CD4-positive, alpha-beta memory T cell (primary cell): ENCODE measurements at regions of chr3 and their contacts with region 1.

Region 1: GRCh38 chr3:27681245-27681748 is 40.8 kb downstream of the EOMES start:
- DNase-seq: peak; percentile 31 to 73 (median 69)
- H3K4me3 ChIP-seq: no peak overlapping the region
- H3K4me3 Mint-ChIP-seq: peak overlapping the region; percentile 17 to 78 (median 71)
- H3K27ac ChIP-seq: no peak overlapping the region
- H3K27ac Mint-ChIP-seq: peak overlapping the region; percentile 2 to 77 (median 29)
- H3K4me1 ChIP-seq: peaks cover 12% of the 10 kb centered on the region
- H3K4me1 Mint-ChIP-seq: peaks cover 5 to 19% (median 14%) of the 10 kb centered on the region in 4 donors
- H3K27me3 ChIP-seq: no peaks in the 10 kb centered on the region
- H3K27me3 Mint-ChIP-seq: peaks cover 3 to 6% of the 10 kb centered on the region in 2 donors

Region 2: DNA sequence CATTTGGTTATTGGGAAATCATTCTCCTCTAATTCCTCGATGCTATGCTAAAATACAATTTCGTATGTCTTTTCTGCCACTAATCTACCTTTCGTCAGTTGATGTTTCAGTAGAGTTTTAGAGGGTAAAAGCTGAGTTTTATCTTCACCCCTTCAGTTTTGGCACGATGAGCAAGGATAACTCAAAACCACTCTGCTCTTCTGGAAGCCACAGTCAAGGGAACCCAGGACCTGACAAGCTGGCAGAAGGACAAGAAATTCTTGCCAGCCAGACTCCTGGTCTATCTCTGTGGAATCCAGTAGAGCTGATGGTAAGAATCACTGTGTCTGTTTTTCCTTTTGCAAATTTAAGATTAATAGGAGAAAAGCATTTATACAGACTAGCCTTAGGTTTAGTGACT is 1473.1 kb before region 1 on chr3:
- CTCF ChIA-PET with region 1: no interaction called
- POLR2A ChIA-PET with region 1: no interaction called
- intact Hi-C with region 1: no loop called
- DNase-seq: no peak
- H3K4me3 ChIP-seq: no peak overlapping the region
- H3K4me3 Mint-ChIP-seq: no peak overlapping the region
- H3K27ac ChIP-seq: no peak overlapping the region
- H3K27ac Mint-ChIP-seq: no peak overlapping the region
- H3K4me1 ChIP-seq: no peaks in the 10 kb centered on the region
- H3K4me1 Mint-ChIP-seq: no peaks in the 10 kb centered on the region
- H3K27me3 ChIP-seq: no peaks in the 10 kb centered on the region
- H3K27me3 Mint-ChIP-seq: no peaks in the 10 kb centered on the region

Region 3: GRCh38 chr3:27134165-27134796 is 547.0 kb before region 1 on chr3:
- CTCF ChIA-PET with region 1: interaction called, 37 read pairs
- POLR2A ChIA-PET with region 1: interaction called, 3 read pairs
- intact Hi-C with region 1: loop called (anchors 1 kb)
- DNase-seq: peak; percentile 41 to 53 (median 49)
- H3K4me3 ChIP-seq: no peak overlapping the region
- H3K4me3 Mint-ChIP-seq: no peak overlapping the region
- H3K27ac ChIP-seq: no peak overlapping the region
- H3K27ac Mint-ChIP-seq: no peak overlapping the region
- H3K4me1 ChIP-seq: no peaks in the 10 kb centered on the region
- H3K4me1 Mint-ChIP-seq: no peaks in the 10 kb centered on the region
- H3K27me3 ChIP-seq: no peaks in the 10 kb centered on the region
- H3K27me3 Mint-ChIP-seq: peaks cover 0 to 2% of the 10 kb centered on the region in 2 donors

Region 4: GRCh38 chr3:27312044-27312668 is 369.1 kb before region 1 on chr3:
- CTCF ChIA-PET with region 1: interaction called, 99 read pairs
- POLR2A ChIA-PET with region 1: no interaction called
- intact Hi-C with region 1: loop called (anchors 1 kb)
- DNase-seq: peak in 4 of 5 donors; percentile 52 to 60 (median 59)
- H3K4me3 ChIP-seq: no peak overlapping the region
- H3K4me3 Mint-ChIP-seq: no peak overlapping the region
- H3K27ac ChIP-seq: no peak overlapping the region
- H3K27ac Mint-ChIP-seq: peak overlapping the region in 1 of 7 donors; percentile 5
- H3K4me1 ChIP-seq: no peaks in the 10 kb centered on the region
- H3K4me1 Mint-ChIP-seq: no peaks in the 10 kb centered on the region
- H3K27me3 ChIP-seq: no peaks in the 10 kb centered on the region
- H3K27me3 Mint-ChIP-seq: no peaks in the 10 kb centered on the region

Region 5: GRCh38 chr3:27357665-27358258 is 323.5 kb before region 1 on chr3:
- CTCF ChIA-PET with region 1: interaction called, 16 read pairs
- POLR2A ChIA-PET with region 1: no interaction called
- intact Hi-C with region 1: loop called (anchors 1 kb)
- DNase-seq: peak; percentile 47 to 59 (median 53)
- H3K4me3 ChIP-seq: no peak overlapping the region
- H3K4me3 Mint-ChIP-seq: peak overlapping the region in 6 of 8 donors; percentile 14 to 74 (median 30)
- H3K27ac ChIP-seq: no peak overlapping the region
- H3K27ac Mint-ChIP-seq: peak overlapping the region in 1 of 7 donors; percentile 58
- H3K4me1 ChIP-seq: peaks cover 34% of the 10 kb centered on the region
- H3K4me1 Mint-ChIP-seq: peaks cover 28 to 60% (median 40%) of the 10 kb centered on the region in 4 donors
- H3K27me3 ChIP-seq: no peaks in the 10 kb centered on the region
- H3K27me3 Mint-ChIP-seq: no peaks in the 10 kb centered on the region

Region 6: GRCh38 chr3:27632431-27633223 is 48.7 kb before region 1 on chr3:
- CTCF ChIA-PET with region 1: interaction called, 12 read pairs
- POLR2A ChIA-PET with region 1: no interaction called
- intact Hi-C with region 1: no loop called
- DNase-seq: peak; percentile 50 to 57 (median 53)
- H3K4me3 ChIP-seq: peak overlapping the region; percentile 8 to 64
- H3K4me3 Mint-ChIP-seq: peak overlapping the region; percentile 90 to 98 (median 94)
- H3K27ac ChIP-seq: peak overlapping the region; percentile 66
- H3K27ac Mint-ChIP-seq: peak overlapping the region; percentile 88 to 98 (median 96)
- H3K4me1 ChIP-seq: peaks cover 26% of the 10 kb centered on the region
- H3K4me1 Mint-ChIP-seq: peaks cover 27 to 45% (median 34%) of the 10 kb centered on the region in 4 donors
- H3K27me3 ChIP-seq: no peaks in the 10 kb centered on the region
- H3K27me3 Mint-ChIP-seq: no peaks in the 10 kb centered on the region

Region 7: DNA sequence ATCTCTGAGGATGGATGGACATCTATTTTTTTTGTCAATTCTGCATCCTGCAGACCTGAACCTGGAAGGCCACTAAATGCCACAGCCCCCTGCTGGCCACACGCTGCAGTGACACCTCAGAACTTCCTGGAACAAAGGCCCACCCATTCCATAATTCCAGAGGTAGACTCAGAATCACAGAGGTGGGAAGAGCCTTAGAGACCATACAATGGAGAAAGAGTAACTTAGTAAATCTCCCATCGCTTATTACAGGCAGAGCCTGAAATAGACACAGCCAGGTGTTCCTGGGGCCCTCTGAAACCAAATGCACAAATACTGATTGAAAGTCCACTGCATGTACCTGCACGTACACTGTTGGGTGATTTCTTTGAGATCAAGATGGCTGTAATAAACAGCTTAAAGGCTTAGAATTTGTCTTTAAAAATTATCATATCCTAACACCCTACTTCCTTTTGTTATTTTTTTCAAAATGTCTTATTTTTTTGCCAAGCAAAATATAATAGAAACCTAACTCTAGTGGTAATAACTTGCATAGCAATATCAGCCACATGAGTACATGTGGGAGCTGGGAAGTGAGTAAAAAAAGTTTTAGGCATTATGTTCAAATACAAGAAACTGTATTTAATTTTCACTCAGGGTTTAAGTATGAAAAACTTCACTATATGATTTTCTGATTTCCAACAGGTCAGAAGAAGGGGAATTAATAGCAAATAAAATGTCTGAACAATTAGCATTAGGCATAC is 21.8 kb before region 1 on chr3:
- CTCF ChIA-PET with region 1: interaction called, 21 read pairs
- POLR2A ChIA-PET with region 1: no interaction called
- intact Hi-C with region 1: no loop called
- DNase-seq: peak in 4 of 5 donors; percentile 29 to 42 (median 38)
- H3K4me3 ChIP-seq: no peak overlapping the region
- H3K4me3 Mint-ChIP-seq: no peak overlapping the region
- H3K27ac ChIP-seq: no peak overlapping the region
- H3K27ac Mint-ChIP-seq: peak overlapping the region in 1 of 7 donors; percentile 30
- H3K4me1 ChIP-seq: no peaks in the 10 kb centered on the region
- H3K4me1 Mint-ChIP-seq: peaks cover 9 to 15% (median 11%) of the 10 kb centered on the region in 4 donors
- H3K27me3 ChIP-seq: no peaks in the 10 kb centered on the region
- H3K27me3 Mint-ChIP-seq: peaks cover 0 to 2% of the 10 kb centered on the region in 2 donors

Region 8: DNA sequence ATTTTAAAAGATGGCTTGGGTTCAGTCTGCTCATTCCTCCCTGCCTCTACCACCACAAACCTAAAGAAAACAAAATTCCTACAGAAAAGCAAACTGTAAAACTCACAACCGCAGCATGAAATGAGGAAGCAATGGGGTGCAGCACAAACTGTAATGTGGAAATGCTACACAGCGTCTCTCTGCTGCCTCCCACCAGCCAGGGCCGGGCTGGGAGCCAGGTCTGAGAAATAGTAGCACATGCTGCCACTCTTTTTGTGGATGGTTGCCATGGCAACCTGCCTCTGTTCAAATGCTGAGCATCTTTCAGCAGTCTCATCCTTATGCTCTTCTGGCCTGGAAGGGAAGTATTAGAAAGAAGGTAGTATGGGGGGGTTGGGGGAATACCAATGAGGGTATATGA is 14.6 kb before region 1 on chr3:
- CTCF ChIA-PET with region 1: interaction called, 14 read pairs
- POLR2A ChIA-PET with region 1: no interaction called
- intact Hi-C with region 1: no loop called
- DNase-seq: peak in 1 of 5 donors; percentile 7
- H3K4me3 ChIP-seq: no peak overlapping the region
- H3K4me3 Mint-ChIP-seq: peak overlapping the region in 4 of 8 donors; percentile 7 to 47 (median 10)
- H3K27ac ChIP-seq: no peak overlapping the region
- H3K27ac Mint-ChIP-seq: peak overlapping the region in 5 of 7 donors; percentile 8 to 58 (median 18)
- H3K4me1 ChIP-seq: peaks cover 9% of the 10 kb centered on the region
- H3K4me1 Mint-ChIP-seq: peaks cover 7 to 11% (median 9%) of the 10 kb centered on the region in 4 donors
- H3K27me3 ChIP-seq: no peaks in the 10 kb centered on the region
- H3K27me3 Mint-ChIP-seq: no peaks in the 10 kb centered on the region